PC-3 (cell line): ENCODE measurements at regions of chr10 and their contacts with region 1.

Region 1: DNA sequence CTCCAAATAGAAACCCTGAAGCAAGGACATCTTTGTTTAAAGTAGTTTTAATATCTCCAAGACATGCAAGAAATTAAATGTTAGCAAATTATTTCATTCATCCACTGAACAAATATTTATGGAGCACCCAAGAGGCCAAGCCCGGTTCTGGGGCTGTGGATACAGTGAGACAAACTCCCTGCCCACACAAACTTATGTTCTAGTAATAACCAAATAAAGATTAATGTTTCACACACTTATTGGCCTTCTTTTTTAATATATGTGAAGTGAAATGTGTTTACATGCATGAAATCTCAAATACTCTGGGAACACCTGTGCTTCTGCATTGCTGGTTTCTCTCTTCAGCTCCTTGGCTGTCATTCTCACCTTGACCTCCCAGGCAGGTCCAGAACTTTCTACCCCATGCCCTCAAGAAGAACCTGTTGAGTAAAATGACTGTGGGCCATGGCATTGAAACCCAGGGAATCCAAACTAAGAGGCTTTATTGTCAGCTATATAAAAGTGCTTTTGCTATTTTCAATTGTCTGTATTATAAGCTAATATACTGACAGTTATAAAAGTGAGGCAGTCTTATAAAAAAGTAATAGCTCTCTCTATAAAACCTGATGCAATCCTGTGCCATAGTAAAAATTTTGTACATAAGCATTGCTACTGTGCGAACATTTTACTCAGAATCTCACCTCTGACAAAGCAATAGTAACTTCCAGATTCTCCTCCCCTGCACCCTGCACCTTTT is 43.7 kb downstream of the SVIL start:
- DNase-seq: peak; percentile 4
- ATAC-seq: peak; percentile 61
- H3K4me3 ChIP-seq: no peak overlapping the region
- H3K27ac ChIP-seq: peak overlapping the region; percentile 96
- H3K4me1 ChIP-seq: peaks cover 37% of the 10 kb centered on the region
- H3K27me3 ChIP-seq: no peaks in the 10 kb centered on the region
- CTCF ChIP-seq: peak; percentile 2; the same call in 1 of the 2 replicates

Region 2: GRCh38 chr10:29535012-29535777 is 55.9 kb before region 1 on chr10:
- CTCF ChIA-PET with region 1: interaction called, 6 read pairs
- POLR2A ChIA-PET with region 1: no interaction called
- intact Hi-C with region 1: loop called (anchors 1 kb)
- DNase-seq: peak; percentile 90
- ATAC-seq: peak; percentile 89
- H3K4me3 ChIP-seq: peak overlapping the region; percentile 43; the same call in 1 of the 2 replicates
- H3K27ac ChIP-seq: peak overlapping the region; percentile 96
- H3K4me1 ChIP-seq: peaks cover 43% of the 10 kb centered on the region
- H3K27me3 ChIP-seq: no peaks in the 10 kb centered on the region
- CTCF ChIP-seq: peak; percentile 90

Region 3: DNA sequence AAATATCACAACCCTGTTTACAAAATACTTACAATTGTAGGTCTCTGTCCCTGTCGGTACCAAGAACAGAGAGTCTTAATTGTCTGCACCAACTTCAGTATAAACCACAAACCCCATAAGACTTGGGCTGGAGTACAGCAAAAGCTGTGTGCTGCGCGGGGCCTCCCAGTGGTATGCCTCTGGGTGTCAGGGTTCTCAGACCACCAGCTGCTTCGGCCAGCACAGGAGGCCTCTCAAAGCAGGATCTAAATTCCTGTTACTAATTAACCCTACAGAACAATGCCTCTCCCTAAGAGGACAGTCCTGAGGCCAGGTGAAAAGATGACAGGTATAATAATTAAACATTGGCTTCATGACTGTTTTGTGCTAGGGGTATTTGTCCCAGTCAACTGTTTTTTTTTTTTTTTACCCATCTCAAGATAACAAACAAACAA is 44.6 kb after region 1 on chr10:
- CTCF ChIA-PET with region 1: no interaction called
- POLR2A ChIA-PET with region 1: no interaction called
- intact Hi-C with region 1: loop called (anchors 1 kb)
- DNase-seq: no peak
- ATAC-seq: peak; percentile 25
- H3K4me3 ChIP-seq: peak overlapping the region; percentile 32; the same call in 1 of the 2 replicates
- H3K27ac ChIP-seq: peak overlapping the region; percentile 99
- H3K4me1 ChIP-seq: peaks cover 54% of the 10 kb centered on the region
- H3K27me3 ChIP-seq: no peaks in the 10 kb centered on the region
- CTCF ChIP-seq: no peak

Region 4: GRCh38 chr10:29735596-29736318 is 144.7 kb after region 1 on chr10:
- CTCF ChIA-PET with region 1: interaction called, 3 read pairs
- POLR2A ChIA-PET with region 1: no interaction called
- intact Hi-C with region 1: loop called (anchors 2 kb)
- DNase-seq: peak; percentile 89
- ATAC-seq: peak; percentile 79
- H3K4me3 ChIP-seq: peak overlapping the region; percentile 81
- H3K27ac ChIP-seq: peak overlapping the region; percentile 69
- H3K4me1 ChIP-seq: peaks cover 13% of the 10 kb centered on the region; the same call in 1 of the 2 replicates
- H3K27me3 ChIP-seq: no peaks in the 10 kb centered on the region
- CTCF ChIP-seq: peak; percentile 71